Colonic mucosa (tissue), 4 donors: ENCODE measurements at regions of chr11 and their contacts with region 1.

Region 1: GRCh38 chr11:111601979-111602864 is at the start of gene SIK2:
- DNase-seq: peak; percentile 90
- H3K4me3 ChIP-seq: peak within 1 kb of the TSS; percentile 93
- H3K27ac ChIP-seq: peak within 1 kb of the TSS; percentile 97
- H3K4me1 ChIP-seq: no peaks in the 10 kb centered on the region
- H3K27me3 ChIP-seq: no peaks in the 10 kb centered on the region
- CTCF ChIP-seq: peak; percentile 87
- total RNA-seq, gene SIK2: 16.2 to 21.3 TPM

Region 2: DNA sequence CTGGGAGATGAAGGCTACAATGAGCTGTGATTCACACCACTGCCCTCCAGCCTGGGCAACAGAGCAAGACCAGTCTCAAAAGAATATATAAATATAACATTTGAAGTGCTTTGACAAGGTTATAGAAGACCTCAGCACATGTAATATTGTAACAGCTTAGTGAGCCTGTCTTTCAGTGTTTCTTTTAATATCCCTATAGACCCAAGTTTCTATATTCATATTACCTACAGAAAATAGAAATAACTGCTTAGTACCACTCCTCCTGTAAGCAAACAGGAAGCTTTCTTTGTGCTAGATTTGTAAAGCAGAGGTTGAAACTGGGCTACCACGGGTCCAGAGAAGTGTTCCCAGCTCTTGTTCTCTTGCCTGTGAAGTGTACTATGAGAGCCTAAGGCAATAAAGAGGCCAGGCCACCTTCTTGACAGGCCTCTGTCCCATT is 95.7 kb after region 1 on chr11:
- intact Hi-C with region 1: no loop called
- DNase-seq: no peak
- H3K4me3 ChIP-seq: no peak overlapping the region
- H3K27ac ChIP-seq: no peak overlapping the region
- H3K4me1 ChIP-seq: no peaks in the 10 kb centered on the region
- H3K27me3 ChIP-seq: no peaks in the 10 kb centered on the region
- CTCF ChIP-seq: no peak

Region 3: GRCh38 chr11:111718436-111718835 is 116.2 kb after region 1 on chr11:
- intact Hi-C with region 1: loop called (anchors 10 kb)
- DNase-seq: peak; percentile 72
- H3K4me3 ChIP-seq: no peak overlapping the region
- H3K27ac ChIP-seq: peak overlapping the region; percentile 34
- H3K4me1 ChIP-seq: no peaks in the 10 kb centered on the region
- H3K27me3 ChIP-seq: no peaks in the 10 kb centered on the region
- CTCF ChIP-seq: no peak

Region 4: GRCh38 chr11:111777094-111778046 is 175.1 kb after region 1 on chr11:
- intact Hi-C with region 1: loop called (anchors 1 kb)
- DNase-seq: peak; percentile 33
- H3K4me3 ChIP-seq: no peak overlapping the region
- H3K27ac ChIP-seq: no peak overlapping the region
- H3K4me1 ChIP-seq: no peaks in the 10 kb centered on the region
- H3K27me3 ChIP-seq: no peaks in the 10 kb centered on the region
- CTCF ChIP-seq: peak; percentile 65

Region 5: DNA sequence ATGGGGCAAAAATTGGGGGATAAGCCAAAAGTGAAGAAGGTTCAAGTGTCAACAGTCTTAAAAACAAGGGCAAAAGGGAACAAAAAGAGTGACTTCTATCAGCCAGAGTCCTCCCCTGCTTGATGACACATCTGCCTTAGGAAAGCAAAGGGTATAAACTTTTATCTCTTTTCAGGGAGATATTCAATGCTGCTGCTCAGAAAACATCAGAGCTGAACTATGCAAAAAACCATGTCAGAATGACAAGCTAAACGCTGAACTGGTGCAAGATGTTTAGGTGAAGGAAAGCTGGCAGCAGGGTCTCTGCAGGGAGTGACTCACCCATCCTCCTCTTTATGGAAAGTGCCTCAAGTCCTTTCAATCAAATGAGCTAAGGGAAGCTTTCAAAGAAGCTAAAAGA is 244.4 kb after region 1 on chr11:
- intact Hi-C with region 1: loop called (anchors 5 kb)
- DNase-seq: no peak
- H3K4me3 ChIP-seq: no peak overlapping the region
- H3K27ac ChIP-seq: no peak overlapping the region
- H3K4me1 ChIP-seq: no peaks in the 10 kb centered on the region
- H3K27me3 ChIP-seq: no peaks in the 10 kb centered on the region
- CTCF ChIP-seq: no peak